KBM-7 (cell line): ENCODE measurements at regions of chr2 and their contacts with region 1.

Region 1: DNA sequence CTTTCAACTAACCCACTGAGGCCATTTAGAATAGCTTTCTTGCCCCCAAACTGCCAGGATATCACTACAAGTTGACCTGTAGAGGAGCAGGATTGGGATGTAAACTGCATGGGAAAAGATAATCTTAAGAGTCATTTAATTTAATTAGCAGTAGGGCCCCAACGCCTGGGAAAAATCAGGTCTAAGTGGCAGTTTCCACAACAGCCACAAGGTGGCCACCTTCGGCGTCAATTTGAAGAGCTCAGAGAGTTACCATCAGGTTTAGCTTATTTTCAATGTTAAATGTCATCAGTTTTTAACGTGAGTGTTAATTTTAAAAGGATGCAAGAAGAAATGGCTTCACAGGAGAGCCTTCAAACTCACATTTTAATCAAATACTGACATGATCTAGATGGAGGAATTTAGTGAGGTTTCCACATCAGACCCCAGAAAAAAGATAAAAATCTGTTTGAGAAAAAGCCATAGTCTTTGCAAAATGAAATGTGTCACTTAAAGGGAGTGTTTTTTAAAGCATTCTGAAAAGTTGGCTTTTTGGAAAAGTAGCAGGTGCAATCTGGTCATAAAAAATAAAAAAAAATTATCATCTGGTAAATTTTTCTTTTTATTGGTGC is 77.3 kb upstream of the UPP2 start:
- DNase-seq: peak; percentile 68

Region 2: GRCh38 chr2:157492189-157492773 is 532.1 kb before region 1 on chr2:
- in situ Hi-C with region 1: loop called (anchors 25 kb)
- DNase-seq: peak; percentile 73

Region 3: GRCh38 chr2:158179660-158180059 is 155.3 kb after region 1 on chr2:
- in situ Hi-C with region 1: no loop called
- DNase-seq: peak; percentile 68

Region 4: DNA sequence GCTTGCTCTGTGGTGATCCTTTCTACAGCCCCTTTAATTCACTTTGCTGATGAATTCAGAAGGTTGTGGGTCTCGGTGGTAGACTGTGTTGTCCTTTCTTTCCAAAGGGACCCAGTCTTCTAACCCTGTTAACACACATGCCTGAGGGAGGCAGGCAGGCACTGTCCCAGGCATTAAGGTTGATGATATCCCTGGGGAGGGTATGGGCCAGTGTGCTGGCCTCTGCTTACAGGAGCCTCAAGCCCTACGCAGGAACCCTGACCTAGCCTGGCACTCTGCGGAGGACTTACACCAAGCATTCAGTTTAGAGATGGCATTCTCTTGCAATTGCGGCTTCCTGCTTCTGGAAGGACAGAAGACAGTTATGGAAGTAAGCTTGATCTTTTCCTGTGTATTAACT is 534.9 kb after region 1 on chr2:
- in situ Hi-C with region 1: no loop called
- DNase-seq: no peak